ENCODE measurements at regions of chr3 and their contacts with region 1.

Region 1: DNA sequence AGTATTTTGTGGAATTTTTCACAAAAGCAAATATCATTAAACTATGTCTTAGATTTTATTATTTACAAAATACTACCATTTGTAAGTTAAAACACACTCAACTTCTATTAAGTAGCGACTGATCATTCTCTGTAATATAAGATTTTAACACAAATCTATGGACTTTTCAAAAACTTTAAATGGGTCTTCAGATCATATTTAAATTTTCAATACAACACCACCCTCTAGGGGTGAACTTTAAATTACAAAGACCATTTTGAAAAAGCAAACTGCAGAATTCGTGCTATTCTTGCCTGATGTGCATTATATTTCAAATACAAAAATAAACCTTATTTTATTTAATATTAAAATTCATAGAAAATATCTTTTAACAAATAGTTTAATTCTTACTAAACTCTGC is 8.2 kb upstream of the VGLL4 start:
- DNase-seq: peak; percentile 62
- H3K4me3 ChIP-seq: no peak overlapping the region
- H3K27ac ChIP-seq: no peak overlapping the region
- H3K4me1 ChIP-seq: no peaks in the 10 kb centered on the region
- H3K27me3 ChIP-seq: no peaks in the 10 kb centered on the region
- CTCF ChIP-seq: peak; percentile 60

Region 2: DNA sequence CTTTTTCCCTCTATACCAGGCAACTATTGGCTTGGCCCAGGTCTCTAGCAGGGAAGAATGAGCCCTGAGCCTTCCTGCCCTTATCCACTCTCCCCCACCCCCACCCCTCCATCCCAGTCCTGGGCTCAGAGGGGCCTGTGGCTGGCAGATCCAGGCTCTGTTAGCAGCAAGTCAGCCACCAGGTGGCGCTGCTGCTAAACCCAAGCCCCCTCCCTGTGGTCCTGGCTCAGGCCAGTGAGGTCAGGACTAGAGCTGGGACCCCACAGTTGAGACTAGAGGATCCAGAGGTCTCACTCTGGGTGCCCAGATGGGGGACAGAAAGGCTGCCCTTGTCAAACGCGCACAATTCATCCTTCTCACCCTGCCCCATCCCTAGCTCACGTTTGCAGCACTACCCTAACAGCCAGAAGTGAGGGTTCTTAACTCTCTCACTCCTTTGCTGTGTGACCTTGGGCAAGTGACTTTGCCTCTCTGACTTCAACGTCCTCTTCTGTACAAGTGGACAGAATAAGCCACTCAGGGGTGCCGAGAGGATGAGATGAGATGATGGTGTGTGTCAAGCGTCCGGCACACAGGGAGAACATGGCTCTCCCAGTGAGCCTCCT is 706.1 kb before region 1 on chr3:
- CTCF ChIA-PET with region 1: interaction called, 5 read pairs
- POLR2A ChIA-PET with region 1: no interaction called
- intact Hi-C with region 1: loop called (anchors 10 kb)
- DNase-seq: peak; percentile 60
- H3K4me3 ChIP-seq: no peak overlapping the region
- H3K27ac ChIP-seq: no peak overlapping the region
- H3K4me1 ChIP-seq: no peaks in the 10 kb centered on the region
- H3K27me3 ChIP-seq: no peaks in the 10 kb centered on the region
- CTCF ChIP-seq: peak; percentile 92

Region 3: DNA sequence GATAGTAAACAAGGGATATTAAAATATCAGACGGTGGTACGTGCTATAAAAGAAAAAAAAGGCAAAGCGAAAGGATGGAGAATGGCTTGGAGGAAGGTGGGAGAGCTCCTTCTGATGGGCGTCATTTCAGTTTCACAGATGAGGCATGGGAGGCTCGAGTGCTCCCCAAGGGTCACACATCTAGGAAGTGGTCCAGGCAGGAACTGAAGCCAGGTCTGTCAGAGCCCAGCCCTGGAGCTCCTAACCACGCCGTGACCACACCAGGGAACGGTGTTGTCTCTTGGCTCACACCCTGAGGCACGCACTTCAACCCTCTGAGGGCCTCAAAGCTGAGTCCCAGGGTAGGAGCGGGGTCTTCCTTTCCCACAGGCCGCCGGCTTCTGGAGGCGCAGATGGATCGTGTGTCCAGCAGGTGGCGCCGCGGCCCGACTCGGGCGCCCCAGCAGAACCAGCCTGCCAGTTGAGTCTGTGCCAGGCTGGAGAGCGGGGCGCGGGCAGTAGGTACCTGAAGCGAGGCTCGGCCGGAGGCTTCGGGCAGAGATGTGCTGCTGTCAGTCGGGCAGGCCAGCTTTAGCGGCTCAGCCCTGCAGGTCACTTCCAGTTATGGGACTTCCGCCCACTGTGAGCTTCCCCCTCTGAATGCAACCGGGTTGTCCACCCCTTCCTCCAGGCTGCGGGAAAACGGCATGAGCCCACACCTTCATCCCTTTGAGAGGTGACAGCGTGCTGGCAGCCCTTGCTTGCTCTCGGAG is 591.2 kb before region 1 on chr3:
- CTCF ChIA-PET with region 1: no interaction called
- POLR2A ChIA-PET with region 1: no interaction called
- intact Hi-C with region 1: loop called (anchors 2 kb)
- DNase-seq: peak; percentile 79
- H3K4me3 ChIP-seq: peak overlapping the region; percentile 15
- H3K27ac ChIP-seq: no peak overlapping the region
- H3K4me1 ChIP-seq: peaks cover 9% of the 10 kb centered on the region
- H3K27me3 ChIP-seq: no peaks in the 10 kb centered on the region
- CTCF ChIP-seq: peak; percentile 93

Region 4: GRCh38 chr3:11155341-11156025 is 496.4 kb before region 1 on chr3:
- CTCF ChIA-PET with region 1: interaction called, 3 read pairs
- POLR2A ChIA-PET with region 1: no interaction called
- intact Hi-C with region 1: loop called (anchors 5 kb)
- DNase-seq: peak; percentile 86
- H3K4me3 ChIP-seq: peak overlapping the region; percentile 37
- H3K27ac ChIP-seq: no peak overlapping the region
- H3K4me1 ChIP-seq: peaks cover 5% of the 10 kb centered on the region
- H3K27me3 ChIP-seq: peaks cover 22% of the 10 kb centered on the region
- CTCF ChIP-seq: peak; percentile 79

Region 5: DNA sequence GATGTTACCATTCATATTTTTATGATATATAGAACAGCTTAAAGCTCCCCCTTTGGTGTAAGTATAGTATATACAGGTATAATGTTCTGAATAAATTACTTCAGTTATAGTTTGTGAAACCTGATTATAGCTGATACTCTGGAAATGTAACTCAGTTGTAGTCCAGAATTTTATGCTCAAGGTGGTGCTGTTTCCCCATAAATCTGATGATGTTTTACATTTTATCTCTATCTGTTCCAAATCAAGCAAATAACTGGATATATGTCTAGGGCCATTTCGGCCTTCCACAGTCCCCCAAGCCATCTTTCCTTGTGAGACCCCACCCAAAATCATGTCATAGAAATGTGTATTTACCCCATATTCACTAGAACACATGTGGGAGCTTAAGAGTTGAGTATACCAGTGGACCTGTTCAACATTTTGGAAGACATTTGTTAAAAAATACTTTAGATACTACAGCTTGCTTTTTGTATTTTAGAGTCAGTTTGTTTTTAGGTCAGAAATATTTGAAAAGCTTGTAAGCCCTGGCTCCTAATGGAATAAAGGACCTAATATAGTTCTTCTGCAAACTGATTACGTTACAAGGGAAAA is 272.6 kb before region 1 on chr3:
- CTCF ChIA-PET with region 1: interaction called, 10 read pairs
- POLR2A ChIA-PET with region 1: no interaction called
- intact Hi-C with region 1: loop called (anchors 1 kb)
- DNase-seq: peak; percentile 65
- H3K4me3 ChIP-seq: no peak overlapping the region
- H3K27ac ChIP-seq: no peak overlapping the region
- H3K4me1 ChIP-seq: peaks cover 7% of the 10 kb centered on the region
- H3K27me3 ChIP-seq: no peaks in the 10 kb centered on the region
- CTCF ChIP-seq: peak; percentile 71

Region 6: GRCh38 chr3:11803977-11804892 is 152.3 kb after region 1 on chr3:
- CTCF ChIA-PET with region 1: interaction called, 4 read pairs
- POLR2A ChIA-PET with region 1: no interaction called
- intact Hi-C with region 1: loop called (anchors 5 kb)
- DNase-seq: peak; percentile 67
- H3K4me3 ChIP-seq: no peak overlapping the region
- H3K27ac ChIP-seq: no peak overlapping the region
- H3K4me1 ChIP-seq: no peaks in the 10 kb centered on the region
- H3K27me3 ChIP-seq: no peaks in the 10 kb centered on the region
- CTCF ChIP-seq: peak; percentile 82

Region 7: DNA sequence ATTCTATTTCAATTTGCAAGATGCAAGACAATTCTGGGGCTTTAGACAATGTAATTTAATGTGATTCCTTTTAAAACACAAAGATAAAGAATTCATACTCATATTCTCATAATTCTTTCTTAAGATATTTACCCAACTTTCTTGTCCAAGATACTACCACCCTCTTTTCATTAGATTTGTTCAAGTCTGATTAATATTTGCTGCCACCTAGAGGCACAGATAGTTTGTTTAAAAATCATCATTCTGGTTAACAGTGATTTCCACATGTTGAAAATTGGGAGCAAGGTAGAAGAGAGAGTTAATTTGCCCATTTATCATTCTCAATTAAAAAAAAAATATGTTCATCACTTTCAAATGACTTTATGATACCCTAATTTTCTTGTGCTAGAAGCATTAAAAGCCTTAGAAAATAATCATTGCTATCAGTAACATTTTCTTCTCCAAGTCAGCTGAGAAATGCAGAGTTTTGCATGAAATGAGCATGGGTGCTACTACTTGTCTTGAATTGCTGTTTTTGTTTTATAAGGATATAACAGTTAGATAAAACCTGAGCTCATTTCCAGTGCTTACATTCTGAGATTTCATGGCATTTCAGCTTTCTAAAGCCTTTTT is 183.2 kb after region 1 on chr3:
- CTCF ChIA-PET with region 1: no interaction called
- POLR2A ChIA-PET with region 1: no interaction called
- intact Hi-C with region 1: loop called (anchors 10 kb)
- DNase-seq: peak; percentile 49
- H3K4me3 ChIP-seq: no peak overlapping the region
- H3K27ac ChIP-seq: no peak overlapping the region
- H3K4me1 ChIP-seq: no peaks in the 10 kb centered on the region
- H3K27me3 ChIP-seq: no peaks in the 10 kb centered on the region
- CTCF ChIP-seq: peak; percentile 64

Measured in A673 (cell line).